Calu3 (cell line): ENCODE measurements at regions of chrX and their contacts with region 1.

Region 1: GRCh38 chrX:136577552-136577951 is 45.5 kb downstream of the VGLL1 start:
- DNase-seq: peak; percentile 62
- H3K4me3 Mint-ChIP-seq: no peak overlapping the region
- H3K27ac Mint-ChIP-seq: no peak overlapping the region
- H3K4me1 Mint-ChIP-seq: no peaks in the 10 kb centered on the region
- H3K27me3 Mint-ChIP-seq: peaks cover 37% of the 10 kb centered on the region
- CTCF ChIP-seq: no peak

Region 2: DNA sequence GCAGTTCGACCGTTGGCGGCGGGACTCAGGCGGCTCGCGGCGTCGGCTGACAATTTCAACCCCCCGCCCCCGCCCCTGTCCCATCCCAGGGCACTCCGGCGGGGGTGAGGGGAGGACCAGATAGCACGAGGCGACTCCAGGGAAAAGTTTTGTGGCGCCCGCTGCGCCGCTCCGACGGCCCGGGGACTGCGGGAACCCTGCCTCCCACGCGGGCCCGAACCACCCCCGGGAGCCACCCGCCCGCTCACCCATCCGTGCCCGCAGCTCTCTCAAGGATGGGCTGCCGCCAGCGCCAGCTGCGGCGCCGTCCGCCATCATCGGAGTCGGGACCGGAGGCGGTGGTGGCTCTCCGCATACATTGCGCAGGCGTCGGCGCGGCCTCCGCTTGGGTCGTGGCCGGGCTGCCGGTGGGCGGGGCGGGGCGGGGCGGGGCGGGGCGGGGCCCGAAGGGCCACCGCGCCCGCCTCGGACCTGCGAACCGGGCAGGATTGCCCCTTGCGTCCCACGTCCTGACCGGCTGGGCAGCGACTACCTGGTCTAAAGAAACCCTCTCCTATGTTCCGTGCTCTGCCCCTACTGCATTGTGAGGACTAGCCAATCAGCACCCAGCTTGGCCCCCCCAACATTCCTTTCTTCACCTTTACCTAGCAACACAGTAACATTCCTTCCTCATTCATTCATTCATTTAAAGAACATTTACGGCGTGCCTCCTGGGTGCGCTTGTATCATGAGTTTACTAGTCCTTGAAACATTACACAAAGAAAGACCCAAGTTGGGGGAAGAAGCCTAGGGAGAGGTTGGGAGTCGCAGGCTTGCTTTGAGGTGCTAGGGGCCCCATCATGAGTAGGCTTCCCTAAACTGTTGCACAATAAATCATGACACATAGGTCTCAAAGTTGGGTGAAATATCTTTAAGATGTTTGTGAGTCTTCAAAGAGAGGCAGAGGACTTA is 326.2 kb before region 1 on chrX and contains the start of gene MAP7D3:
- CTCF ChIA-PET with region 1: no interaction called
- intact Hi-C with region 1: loop called (anchors 10 kb)
- DNase-seq: peak; percentile 60
- H3K4me3 Mint-ChIP-seq: peak within 1 kb of the TSS; percentile 78
- H3K27ac Mint-ChIP-seq: peak within 1 kb of the TSS; percentile 96
- H3K4me1 Mint-ChIP-seq: no peaks in the 10 kb centered on the region
- H3K27me3 Mint-ChIP-seq: no peaks in the 10 kb centered on the region
- CTCF ChIP-seq: no peak
- total RNA-seq, gene MAP7D3: 7.9 and 8.0 TPM in 2 replicates

Region 3: DNA sequence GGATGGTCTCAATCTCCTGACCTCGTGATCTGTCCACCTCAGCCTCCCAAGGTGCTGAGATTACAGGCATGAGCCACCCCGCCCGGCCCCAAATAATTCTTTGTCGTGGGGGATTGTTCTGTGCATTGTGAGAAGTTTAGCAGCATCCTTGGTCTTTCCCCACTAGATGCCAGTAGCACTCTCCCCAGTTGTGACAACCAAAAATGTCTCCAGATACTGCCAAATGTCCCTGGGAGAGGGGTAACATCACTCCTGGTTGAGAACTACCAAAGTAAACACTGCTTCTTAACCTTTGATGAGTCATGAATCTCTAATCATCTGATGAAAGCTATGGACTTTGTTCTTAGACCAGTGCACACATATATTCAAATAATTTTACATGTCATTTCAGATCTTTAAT is 180.6 kb before region 1 on chrX:
- CTCF ChIA-PET with region 1: no interaction called
- intact Hi-C with region 1: loop called (anchors 2 kb)
- DNase-seq: peak; percentile 6
- H3K4me3 Mint-ChIP-seq: no peak overlapping the region
- H3K27ac Mint-ChIP-seq: no peak overlapping the region
- H3K4me1 Mint-ChIP-seq: no peaks in the 10 kb centered on the region
- H3K27me3 Mint-ChIP-seq: no peaks in the 10 kb centered on the region
- CTCF ChIP-seq: no peak

Region 4: GRCh38 chrX:136457303-136457917 is 120.1 kb before region 1 on chrX:
- CTCF ChIA-PET with region 1: no interaction called
- intact Hi-C with region 1: no loop called
- DNase-seq: no peak
- H3K4me3 Mint-ChIP-seq: no peak overlapping the region
- H3K27ac Mint-ChIP-seq: no peak overlapping the region
- H3K4me1 Mint-ChIP-seq: no peaks in the 10 kb centered on the region
- H3K27me3 Mint-ChIP-seq: no peaks in the 10 kb centered on the region
- CTCF ChIP-seq: no peak

Region 5: GRCh38 chrX:136496770-136497598 is 80.6 kb before region 1 on chrX and contains the start of gene HTATSF1:
- CTCF ChIA-PET with region 1: no interaction called
- intact Hi-C with region 1: loop called (anchors 1 kb)
- DNase-seq: peak; percentile 86
- H3K4me3 Mint-ChIP-seq: peak within 1 kb of the TSS; percentile 73
- H3K27ac Mint-ChIP-seq: peak within 1 kb of the TSS; percentile 82
- H3K4me1 Mint-ChIP-seq: peaks cover 5% of the 10 kb centered on the region
- H3K27me3 Mint-ChIP-seq: peaks cover 6% of the 10 kb centered on the region
- CTCF ChIP-seq: no peak
- total RNA-seq, gene HTATSF1: 46.0 and 48.7 TPM in 2 replicates

Region 6: DNA sequence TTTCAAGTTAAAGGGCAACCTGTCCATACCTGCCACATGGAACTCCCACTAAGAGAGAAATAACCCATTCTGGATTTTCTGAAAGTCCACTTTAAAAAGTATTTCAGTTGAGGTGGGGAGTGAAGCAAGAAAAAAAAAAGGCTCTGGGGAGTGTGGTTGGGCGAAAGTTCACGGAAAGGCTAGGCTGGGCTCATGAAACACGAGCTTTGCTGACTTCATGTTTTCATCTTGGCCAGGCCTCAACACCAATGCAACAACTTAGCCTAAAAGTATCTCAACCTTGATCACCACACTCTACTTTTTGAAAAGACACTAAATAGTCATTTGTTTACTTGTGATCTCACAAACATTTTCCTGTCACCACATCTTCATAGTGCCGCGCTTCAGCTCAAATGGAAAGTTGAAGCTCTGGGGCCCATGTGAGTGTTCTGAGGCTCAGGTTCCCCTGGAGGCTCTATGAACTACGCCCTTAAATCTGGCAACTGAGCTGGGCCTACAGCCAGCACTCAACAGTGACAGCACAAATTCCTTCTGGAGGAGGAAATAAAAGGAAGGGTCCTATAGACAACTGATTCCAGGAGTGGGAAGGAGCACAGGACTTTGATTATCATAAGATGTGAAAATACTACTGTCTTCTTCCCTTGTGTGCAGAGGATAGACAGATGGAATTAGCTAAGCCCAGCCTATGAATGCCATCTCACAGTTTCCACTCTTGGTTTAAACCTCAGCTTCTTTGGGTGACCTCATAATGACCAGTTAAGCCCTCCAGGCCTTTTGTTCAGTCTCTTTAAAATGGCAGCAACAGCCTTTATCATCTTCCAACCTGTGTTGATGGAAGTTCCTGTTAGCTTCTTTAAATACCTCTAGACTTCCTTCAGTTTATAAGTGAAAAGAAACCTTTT is 75.5 kb after region 1 on chrX:
- CTCF ChIA-PET with region 1: no interaction called
- intact Hi-C with region 1: no loop called
- DNase-seq: no peak
- H3K4me3 Mint-ChIP-seq: no peak overlapping the region
- H3K27ac Mint-ChIP-seq: no peak overlapping the region
- H3K4me1 Mint-ChIP-seq: no peaks in the 10 kb centered on the region
- H3K27me3 Mint-ChIP-seq: peaks cover 38% of the 10 kb centered on the region
- CTCF ChIP-seq: no peak